ENCODE measurements at regions of chrX and their contacts with region 1.

Region 1: DNA sequence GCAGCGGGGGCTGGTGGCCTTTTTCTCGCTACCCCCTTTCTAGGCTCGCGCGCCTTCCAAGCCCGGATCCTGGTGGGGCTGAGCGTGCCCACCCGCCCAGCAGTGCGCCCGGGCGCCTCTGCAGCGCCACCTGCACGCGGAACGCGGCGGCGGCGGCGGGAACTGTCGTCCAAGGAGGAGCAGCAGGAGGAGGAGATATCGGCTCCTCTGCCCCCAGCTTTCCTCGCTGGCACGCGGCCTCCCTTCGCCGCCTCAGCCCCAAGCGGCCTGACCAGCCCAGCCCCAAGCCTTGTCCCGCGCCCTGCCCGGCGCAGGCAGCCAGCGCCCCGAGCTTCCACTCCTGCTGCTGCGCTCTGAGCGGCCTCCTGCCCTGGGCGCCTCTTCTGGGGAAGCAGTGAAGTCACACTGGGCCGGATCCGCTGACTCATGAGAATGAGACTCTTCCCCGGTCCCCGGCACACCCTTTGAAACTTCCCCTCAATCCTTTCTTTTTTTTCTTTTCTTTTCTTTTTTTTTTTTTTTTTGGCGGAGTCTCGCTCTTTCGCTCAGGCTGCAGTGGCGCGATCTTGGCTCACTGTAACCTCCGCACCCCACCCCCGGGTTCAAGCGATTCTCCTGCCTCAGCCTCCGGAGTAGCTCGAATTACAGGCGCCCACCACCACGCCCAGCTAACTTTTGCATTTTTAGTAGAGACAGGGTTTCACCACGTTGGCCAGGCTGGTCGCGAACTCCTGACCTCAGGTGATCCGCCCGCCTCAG is 10.6 kb upstream of the ELF4 start:
- DNase-seq: peak; percentile 64
- ATAC-seq: peak; percentile 83
- H3K4me3 Mint-ChIP-seq: peak overlapping the region; percentile 76
- H3K27ac Mint-ChIP-seq: peak overlapping the region; percentile 53
- H3K4me1 Mint-ChIP-seq: peaks cover 18% of the 10 kb centered on the region
- H3K27me3 Mint-ChIP-seq: no peaks in the 10 kb centered on the region
- CTCF ChIP-seq: no peak

Region 2: GRCh38 chrX:129846716-129847115 is 274.2 kb before region 1 on chrX:
- CTCF ChIA-PET with region 1: no interaction called
- POLR2A ChIA-PET with region 1: no interaction called
- intact Hi-C with region 1: no loop called
- DNase-seq: no peak
- ATAC-seq: no peak
- H3K4me3 Mint-ChIP-seq: no peak overlapping the region
- H3K27ac Mint-ChIP-seq: no peak overlapping the region
- H3K4me1 Mint-ChIP-seq: peaks cover 12% of the 10 kb centered on the region
- H3K27me3 Mint-ChIP-seq: no peaks in the 10 kb centered on the region
- CTCF ChIP-seq: no peak

Region 3: DNA sequence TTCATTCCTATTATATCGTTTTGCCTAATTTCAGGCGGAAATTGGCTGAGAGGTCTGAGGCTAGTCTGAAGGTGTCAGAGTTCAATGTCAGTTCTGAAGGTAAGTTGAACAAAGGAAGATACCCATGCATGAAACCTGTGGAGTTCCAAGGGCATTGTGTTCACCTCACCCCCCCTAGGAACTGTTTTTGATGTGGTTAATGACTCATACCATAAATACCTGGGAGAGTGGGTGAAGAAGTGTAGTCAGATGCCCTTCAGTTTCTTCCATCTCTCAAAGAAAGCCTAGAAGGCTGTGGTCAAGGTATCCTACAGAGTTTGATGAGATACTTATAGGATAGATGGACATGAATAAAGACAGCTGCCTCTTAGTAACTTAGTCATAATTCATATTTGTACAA is 212.3 kb before region 1 on chrX:
- CTCF ChIA-PET with region 1: no interaction called
- POLR2A ChIA-PET with region 1: no interaction called
- intact Hi-C with region 1: no loop called
- DNase-seq: no peak
- ATAC-seq: no peak
- H3K4me3 Mint-ChIP-seq: no peak overlapping the region
- H3K27ac Mint-ChIP-seq: no peak overlapping the region
- H3K4me1 Mint-ChIP-seq: peaks cover 4% of the 10 kb centered on the region
- H3K27me3 Mint-ChIP-seq: no peaks in the 10 kb centered on the region
- CTCF ChIP-seq: no peak

Region 4: DNA sequence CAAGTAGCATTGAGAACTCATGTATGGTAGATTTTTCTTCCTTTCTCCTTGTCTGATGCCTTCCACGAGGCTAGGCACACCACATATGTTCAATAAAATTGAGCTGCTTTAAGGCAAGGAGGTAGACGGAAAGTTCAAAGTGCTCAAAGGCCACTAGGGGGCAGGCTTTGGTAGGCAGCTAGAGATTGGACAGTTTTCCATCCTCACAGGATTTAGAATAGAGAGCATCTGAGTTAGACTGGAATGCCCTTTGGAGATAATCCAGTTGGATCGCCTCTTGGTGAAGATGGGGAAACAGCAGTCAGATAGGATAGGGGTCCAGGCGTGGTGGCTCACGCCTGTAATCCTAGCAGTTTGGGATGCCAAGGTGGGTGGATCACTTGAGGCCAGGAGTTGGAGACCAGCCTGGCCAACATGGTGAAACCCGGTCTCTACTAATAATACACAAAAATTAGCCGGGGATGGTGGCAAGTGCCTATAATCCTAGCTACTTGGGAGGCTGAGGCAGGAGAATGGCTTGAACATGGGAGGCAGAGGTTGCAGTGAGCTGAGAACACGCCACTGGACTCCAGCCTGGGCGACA is 41.0 kb before region 1 on chrX:
- CTCF ChIA-PET with region 1: interaction called, 90 read pairs
- POLR2A ChIA-PET with region 1: interaction called, 35 read pairs
- intact Hi-C with region 1: loop called (anchors 1 kb)
- DNase-seq: no peak
- ATAC-seq: no peak
- H3K4me3 Mint-ChIP-seq: no peak overlapping the region
- H3K27ac Mint-ChIP-seq: peak overlapping the region; percentile 61
- H3K4me1 Mint-ChIP-seq: peaks cover 41% of the 10 kb centered on the region
- H3K27me3 Mint-ChIP-seq: no peaks in the 10 kb centered on the region
- CTCF ChIP-seq: no peak

Region 5: GRCh38 chrX:130086447-130087206 is 34.3 kb before region 1 on chrX:
- CTCF ChIA-PET with region 1: interaction called, 90 read pairs
- POLR2A ChIA-PET with region 1: interaction called, 35 read pairs
- intact Hi-C with region 1: loop called (anchors 1 kb)
- DNase-seq: no peak
- ATAC-seq: peak; percentile 38
- H3K4me3 Mint-ChIP-seq: peak overlapping the region; percentile 62
- H3K27ac Mint-ChIP-seq: peak overlapping the region; percentile 89
- H3K4me1 Mint-ChIP-seq: peaks cover 78% of the 10 kb centered on the region
- H3K27me3 Mint-ChIP-seq: no peaks in the 10 kb centered on the region
- CTCF ChIP-seq: no peak